CD4-positive, alpha-beta memory T cell (primary cell): ENCODE measurements at regions of chr12 and their contacts with region 1.

Region 1: GRCh38 chr12:121550974-121551634 is 29.7 kb downstream of the KDM2B start:
- DNase-seq: no peak
- H3K4me3 ChIP-seq: no peak overlapping the region
- H3K4me3 Mint-ChIP-seq: no peak overlapping the region
- H3K27ac ChIP-seq: no peak overlapping the region
- H3K27ac Mint-ChIP-seq: peak overlapping the region in 2 of 7 donors; percentile 42 to 64
- H3K4me1 ChIP-seq: no peaks in the 10 kb centered on the region
- H3K4me1 Mint-ChIP-seq: peaks cover 3 to 7% (median 5%) of the 10 kb centered on the region in 4 donors
- H3K27me3 ChIP-seq: no peaks in the 10 kb centered on the region
- H3K27me3 Mint-ChIP-seq: no peaks in the 10 kb centered on the region

Region 2: GRCh38 chr12:120748242-120748641 is 802.9 kb before region 1 on chr12:
- CTCF ChIA-PET with region 1: no interaction called
- POLR2A ChIA-PET with region 1: no interaction called
- intact Hi-C with region 1: no loop called
- DNase-seq: peak in 2 of 5 donors; percentile 6 to 11
- H3K4me3 ChIP-seq: no peak overlapping the region
- H3K4me3 Mint-ChIP-seq: no peak overlapping the region
- H3K27ac ChIP-seq: no peak overlapping the region
- H3K27ac Mint-ChIP-seq: peak overlapping the region in 3 of 7 donors; percentile 3 to 57 (median 13)
- H3K4me1 ChIP-seq: no peaks in the 10 kb centered on the region
- H3K4me1 Mint-ChIP-seq: peaks cover 0 to 6% (median under 1%) of the 10 kb centered on the region in 4 donors
- H3K27me3 ChIP-seq: no peaks in the 10 kb centered on the region
- H3K27me3 Mint-ChIP-seq: no peaks in the 10 kb centered on the region

Region 3: GRCh38 chr12:121499929-121500793 is 50.9 kb before region 1 on chr12:
- CTCF ChIA-PET with region 1: interaction called, 24 read pairs
- POLR2A ChIA-PET with region 1: no interaction called
- intact Hi-C with region 1: no loop called
- DNase-seq: peak; percentile 62 to 72 (median 71)
- H3K4me3 ChIP-seq: no peak overlapping the region
- H3K4me3 Mint-ChIP-seq: peak overlapping the region in 1 of 8 donors; percentile 11
- H3K27ac ChIP-seq: no peak overlapping the region
- H3K27ac Mint-ChIP-seq: peak overlapping the region in 3 of 7 donors; percentile 17 to 74 (median 63)
- H3K4me1 ChIP-seq: peaks cover 17% of the 10 kb centered on the region
- H3K4me1 Mint-ChIP-seq: peaks cover 8 to 21% (median 15%) of the 10 kb centered on the region in 4 donors
- H3K27me3 ChIP-seq: no peaks in the 10 kb centered on the region
- H3K27me3 Mint-ChIP-seq: no peaks in the 10 kb centered on the region

Region 4: DNA sequence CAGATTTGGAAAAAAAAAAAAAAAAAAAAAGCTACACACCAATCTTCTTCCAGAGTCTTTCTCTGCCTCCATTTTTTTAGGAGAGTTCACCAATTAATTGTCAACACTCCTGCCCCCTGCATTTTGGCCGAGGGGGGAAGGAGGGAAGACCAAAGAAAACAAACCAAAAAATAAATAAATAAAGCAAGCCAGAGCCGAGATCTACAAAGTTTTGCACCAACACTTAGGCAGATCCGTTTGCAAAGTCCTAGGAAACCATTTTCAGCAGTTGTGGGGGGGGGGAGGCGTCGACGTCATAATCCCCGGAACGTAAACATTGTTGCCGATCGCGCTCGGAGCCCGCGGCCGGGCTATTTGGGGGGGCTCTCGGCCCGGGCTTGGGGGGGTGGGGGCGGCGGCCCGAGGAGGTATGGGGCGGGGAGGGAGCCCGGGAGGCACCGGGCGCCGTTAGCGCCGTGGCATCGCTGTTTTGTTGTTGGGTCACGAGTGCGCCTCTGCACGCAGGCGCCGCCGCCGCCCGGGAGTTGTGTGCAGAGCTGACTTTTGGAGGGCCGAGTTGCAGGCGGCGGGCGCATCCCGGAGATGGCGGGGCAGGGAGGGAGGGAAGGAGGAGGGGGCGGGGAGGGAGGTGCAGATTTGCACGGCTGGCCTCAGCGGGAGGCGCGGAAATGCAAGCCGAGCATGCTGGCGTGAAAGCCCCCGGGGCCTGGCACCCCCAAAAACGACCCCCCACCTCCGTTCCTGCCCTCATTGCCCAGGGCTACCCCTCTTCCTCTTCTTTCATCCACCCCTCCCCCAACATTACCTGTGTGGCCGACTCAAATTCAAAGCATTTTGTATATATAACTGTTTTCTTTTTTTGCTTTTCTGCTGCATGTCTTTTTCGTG is 29.1 kb after region 1 on chr12:
- CTCF ChIA-PET with region 1: interaction called, 34 read pairs
- POLR2A ChIA-PET with region 1: interaction called, 14 read pairs
- intact Hi-C with region 1: no loop called
- DNase-seq: peak; percentile 74 to 86 (median 77)
- H3K4me3 ChIP-seq: peak overlapping the region; percentile 63 to 87
- H3K4me3 Mint-ChIP-seq: peak overlapping the region; percentile 95 to 99 (median 98)
- H3K27ac ChIP-seq: peak overlapping the region; percentile 71
- H3K27ac Mint-ChIP-seq: peak overlapping the region; percentile 92 to 99 (median 98)
- H3K4me1 ChIP-seq: peaks cover 53% of the 10 kb centered on the region
- H3K4me1 Mint-ChIP-seq: peaks cover 21 to 65% (median 44%) of the 10 kb centered on the region in 4 donors
- H3K27me3 ChIP-seq: no peaks in the 10 kb centered on the region
- H3K27me3 Mint-ChIP-seq: no peaks in the 10 kb centered on the region

Region 5: DNA sequence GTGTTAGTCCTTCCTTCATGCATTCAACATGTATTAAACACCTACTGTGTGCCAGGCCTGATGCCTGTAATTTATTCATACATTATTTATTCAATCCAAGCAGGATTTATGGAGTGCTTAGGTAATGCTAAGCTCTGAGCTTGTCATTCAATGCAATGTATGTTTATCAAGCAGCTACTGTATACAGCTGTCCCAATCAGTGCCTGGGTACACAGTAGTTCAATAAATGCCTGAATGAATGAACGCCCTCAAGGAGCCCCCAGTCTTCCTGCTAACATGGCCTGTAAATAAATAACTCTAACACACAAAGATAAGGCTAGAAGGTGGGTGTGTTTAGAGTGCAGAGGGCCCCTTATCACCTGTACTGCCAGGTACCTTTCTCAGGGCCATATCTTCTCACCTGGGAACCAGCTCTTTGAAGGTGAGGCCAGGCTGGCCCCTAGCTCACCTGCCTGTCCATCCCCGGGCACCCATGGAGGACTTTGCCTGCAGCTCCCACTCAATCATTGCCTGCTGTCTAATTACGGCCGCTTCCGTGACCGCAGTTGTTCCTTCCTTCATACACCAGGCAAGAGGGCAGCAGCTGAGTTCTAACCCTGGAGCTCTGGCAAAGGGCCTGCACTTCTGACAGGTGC is 49.7 kb after region 1 on chr12:
- CTCF ChIA-PET with region 1: interaction called, 15 read pairs
- POLR2A ChIA-PET with region 1: interaction called, 4 read pairs
- intact Hi-C with region 1: no loop called
- DNase-seq: no peak
- H3K4me3 ChIP-seq: no peak overlapping the region
- H3K4me3 Mint-ChIP-seq: no peak overlapping the region
- H3K27ac ChIP-seq: no peak overlapping the region
- H3K27ac Mint-ChIP-seq: no peak overlapping the region
- H3K4me1 ChIP-seq: no peaks in the 10 kb centered on the region
- H3K4me1 Mint-ChIP-seq: peaks cover 0 to 4% (median 1%) of the 10 kb centered on the region in 4 donors
- H3K27me3 ChIP-seq: no peaks in the 10 kb centered on the region
- H3K27me3 Mint-ChIP-seq: no peaks in the 10 kb centered on the region

Region 6: GRCh38 chr12:121657305-121658008 is 106.4 kb after region 1 on chr12:
- CTCF ChIA-PET with region 1: interaction called, 15 read pairs
- POLR2A ChIA-PET with region 1: interaction called, 3 read pairs
- intact Hi-C with region 1: no loop called
- DNase-seq: no peak
- H3K4me3 ChIP-seq: no peak overlapping the region
- H3K4me3 Mint-ChIP-seq: peak overlapping the region; percentile 8 to 94 (median 62)
- H3K27ac ChIP-seq: no peak overlapping the region
- H3K27ac Mint-ChIP-seq: peak overlapping the region; percentile 78 to 100 (median 99)
- H3K4me1 ChIP-seq: peaks cover 56% of the 10 kb centered on the region
- H3K4me1 Mint-ChIP-seq: peaks cover 41 to 77% (median 55%) of the 10 kb centered on the region in 4 donors
- H3K27me3 ChIP-seq: no peaks in the 10 kb centered on the region
- H3K27me3 Mint-ChIP-seq: no peaks in the 10 kb centered on the region

Region 7: DNA sequence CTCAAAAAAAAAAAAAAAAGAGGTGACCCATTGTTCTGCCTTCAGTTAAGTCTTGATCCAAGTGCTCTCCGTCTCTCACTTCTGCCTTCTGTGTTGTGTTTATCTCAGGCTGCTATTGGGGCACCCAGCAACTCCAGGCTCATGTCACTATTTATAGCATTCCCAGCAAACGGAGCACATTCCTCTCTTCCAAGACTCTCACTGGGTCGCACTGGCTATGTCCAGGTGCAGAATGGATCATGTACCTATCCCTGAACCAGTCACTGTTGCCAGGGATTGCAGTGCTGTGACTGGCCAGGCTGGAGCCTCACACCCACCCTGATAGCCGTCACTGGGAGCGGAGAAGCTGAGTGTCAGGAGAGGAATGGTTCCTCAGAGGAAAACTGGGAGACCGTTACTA is 211.2 kb after region 1 on chr12:
- CTCF ChIA-PET with region 1: no interaction called
- POLR2A ChIA-PET with region 1: no interaction called
- intact Hi-C with region 1: no loop called
- DNase-seq: no peak
- H3K4me3 ChIP-seq: no peak overlapping the region
- H3K4me3 Mint-ChIP-seq: no peak overlapping the region
- H3K27ac ChIP-seq: no peak overlapping the region
- H3K27ac Mint-ChIP-seq: no peak overlapping the region
- H3K4me1 ChIP-seq: no peaks in the 10 kb centered on the region
- H3K4me1 Mint-ChIP-seq: no peaks in the 10 kb centered on the region
- H3K27me3 ChIP-seq: no peaks in the 10 kb centered on the region
- H3K27me3 Mint-ChIP-seq: no peaks in the 10 kb centered on the region